HEK293 (cell line): ENCODE measurements at regions of chr22 and their contacts with region 1.

Region 1: DNA sequence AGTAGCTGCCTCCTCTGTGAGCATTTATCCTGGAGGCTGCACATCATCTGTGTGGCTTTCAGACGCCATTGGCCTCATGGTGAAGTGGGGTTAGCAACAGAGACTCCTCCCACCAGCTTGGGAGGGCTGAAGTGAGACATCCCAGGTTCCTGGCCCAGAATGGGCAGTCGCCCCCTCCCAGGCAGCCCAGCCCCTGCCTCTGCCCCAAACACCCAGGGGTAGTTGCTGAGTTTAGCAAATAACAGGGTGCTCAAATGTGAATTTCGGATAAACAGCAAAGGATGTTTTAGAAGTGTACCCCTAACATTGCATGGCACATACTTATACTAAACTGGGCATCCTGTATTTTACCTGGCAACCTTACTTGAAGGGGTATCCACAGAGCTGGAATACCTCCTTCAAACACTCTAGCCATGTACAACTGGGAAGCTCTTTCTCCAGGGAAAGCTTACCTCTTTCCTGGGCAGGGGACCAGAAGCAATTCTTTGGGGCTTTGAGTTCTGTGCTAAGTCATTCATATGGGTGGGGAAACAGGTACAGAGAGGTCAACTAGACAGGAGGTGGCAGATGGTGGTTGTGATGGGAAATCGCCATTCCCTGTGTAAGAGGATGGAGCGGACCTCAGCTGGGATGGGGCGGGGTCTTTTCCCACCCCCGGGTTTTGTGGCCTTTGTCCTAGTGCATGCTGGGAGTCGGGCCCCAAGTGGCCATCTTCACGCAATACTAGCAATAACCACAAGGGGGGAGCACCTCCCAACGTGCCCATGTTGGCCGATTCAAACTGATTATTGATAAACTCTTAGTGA is 19.3 kb downstream of the MTFP1 start:
- H3K4me3 ChIP-seq: peak overlapping the region; percentile 10
- H3K27ac ChIP-seq: no peak overlapping the region
- H3K4me1 ChIP-seq: no peaks in the 10 kb centered on the region
- CTCF ChIP-seq: 0 out of 2 replicates have a peak, but pooled peaks have one; percentile 44

Region 2: GRCh38 chr22:30459181-30460052 is 14.6 kb after region 1 on chr22:
- CTCF ChIA-PET with region 1: interaction called, 16 read pairs
- POLR2A ChIA-PET with region 1: no interaction called
- H3K4me3 ChIP-seq: no peak overlapping the region
- H3K27ac ChIP-seq: no peak overlapping the region
- H3K4me1 ChIP-seq: no peaks in the 10 kb centered on the region
- CTCF ChIP-seq: no peak

Region 3: GRCh38 chr22:30485362-30485988 is 40.6 kb after region 1 on chr22:
- CTCF ChIA-PET with region 1: interaction called, 59 read pairs
- POLR2A ChIA-PET with region 1: no interaction called
- H3K4me3 ChIP-seq: no peak overlapping the region
- H3K27ac ChIP-seq: no peak overlapping the region
- H3K4me1 ChIP-seq: no peaks in the 10 kb centered on the region
- CTCF ChIP-seq: peak; percentile 89